CD8-positive, alpha-beta T cell (primary cell): ENCODE measurements at regions of chr7 and their contacts with region 1.

Region 1: GRCh38 chr7:23013715-23014649 is at the start of gene HYCC1:
- DNase-seq: peak; percentile 97 to 99 (median 99)
- ATAC-seq: peak; percentile 97
- H3K4me3 ChIP-seq: peak within 1 kb of the TSS; percentile 65 to 95
- H3K4me3 Mint-ChIP-seq: peak within 1 kb of the TSS; percentile 97
- H3K27ac ChIP-seq: peak within 1 kb of the TSS; percentile 48 to 63
- H3K27ac Mint-ChIP-seq: peak within 1 kb of the TSS; percentile 89
- H3K4me1 ChIP-seq: peaks cover 21% of the 10 kb centered on the region
- H3K4me1 Mint-ChIP-seq: peaks cover 20% of the 10 kb centered on the region
- H3K27me3 ChIP-seq: no peaks in the 10 kb centered on the region
- H3K27me3 Mint-ChIP-seq: peaks cover 3% of the 10 kb centered on the region
- CTCF ChIP-seq: peak; percentile 60
- total RNA-seq, gene HYCC1: 10.7 to 13.5 TPM

Region 2: GRCh38 chr7:22822486-22823141 is 191.4 kb before region 1 on chr7 and contains the start of gene TOMM7:
- CTCF ChIA-PET with region 1: no interaction called
- POLR2A ChIA-PET with region 1: no interaction called
- intact Hi-C with region 1: loop called (anchors 1 kb)
- DNase-seq: peak; percentile 72 to 99 (median 86)
- ATAC-seq: peak; percentile 96
- H3K4me3 ChIP-seq: peak within 1 kb of the TSS; percentile 74 to 89
- H3K4me3 Mint-ChIP-seq: peak within 1 kb of the TSS; percentile 99
- H3K27ac ChIP-seq: peak within 1 kb of the TSS; percentile 85
- H3K27ac Mint-ChIP-seq: peak within 1 kb of the TSS; percentile 99
- H3K4me1 ChIP-seq: peaks cover 20% of the 10 kb centered on the region
- H3K4me1 Mint-ChIP-seq: peaks cover 41% of the 10 kb centered on the region
- H3K27me3 ChIP-seq: no peaks in the 10 kb centered on the region
- H3K27me3 Mint-ChIP-seq: peaks cover 4% of the 10 kb centered on the region
- CTCF ChIP-seq: no peak
- total RNA-seq, gene TOMM7: 595 to 610 TPM

Region 3: GRCh38 chr7:22962775-22963358 is 51.1 kb before region 1 on chr7:
- CTCF ChIA-PET with region 1: no interaction called
- POLR2A ChIA-PET with region 1: no interaction called
- intact Hi-C with region 1: no loop called
- DNase-seq: no peak
- ATAC-seq: no peak
- H3K4me3 ChIP-seq: no peak overlapping the region
- H3K4me3 Mint-ChIP-seq: no peak overlapping the region
- H3K27ac ChIP-seq: no peak overlapping the region
- H3K27ac Mint-ChIP-seq: no peak overlapping the region
- H3K4me1 ChIP-seq: no peaks in the 10 kb centered on the region
- H3K4me1 Mint-ChIP-seq: no peaks in the 10 kb centered on the region
- H3K27me3 ChIP-seq: no peaks in the 10 kb centered on the region
- H3K27me3 Mint-ChIP-seq: no peaks in the 10 kb centered on the region
- CTCF ChIP-seq: no peak

Region 4: DNA sequence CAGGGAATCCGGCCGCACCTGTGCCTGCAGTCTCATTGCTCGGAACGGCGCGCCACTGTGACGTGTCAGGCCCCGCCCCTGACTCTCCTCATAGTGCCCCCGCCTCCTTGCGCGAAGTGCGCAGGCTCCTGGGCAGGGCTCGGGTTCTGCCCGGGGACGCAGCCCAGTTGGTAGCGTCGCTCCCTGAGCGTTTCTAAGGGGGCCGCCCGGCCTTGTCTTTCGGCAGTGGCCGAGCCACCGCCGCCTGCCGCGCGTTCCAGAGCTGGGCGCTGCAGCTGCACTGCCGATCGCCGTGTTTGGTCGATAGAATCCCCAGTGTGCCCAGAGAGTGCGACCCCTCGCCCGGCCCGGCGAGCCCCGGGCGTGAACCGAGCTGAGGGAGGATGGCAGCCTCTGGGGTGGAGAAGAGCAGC is 91.7 kb after region 1 on chr7 and contains the start of gene KLHL7:
- CTCF ChIA-PET with region 1: no interaction called
- POLR2A ChIA-PET with region 1: interaction called, 5 read pairs
- intact Hi-C with region 1: loop called (anchors 1 to 2 kb)
- DNase-seq: peak; percentile 92 to 98 (median 96)
- ATAC-seq: peak; percentile 95
- H3K4me3 ChIP-seq: peak within 1 kb of the TSS; percentile 93 to 94
- H3K4me3 Mint-ChIP-seq: peak within 1 kb of the TSS; percentile 98
- H3K27ac ChIP-seq: peak within 1 kb of the TSS; percentile 97
- H3K27ac Mint-ChIP-seq: peak within 1 kb of the TSS; percentile 95
- H3K4me1 ChIP-seq: peaks cover 23% of the 10 kb centered on the region
- H3K4me1 Mint-ChIP-seq: peaks cover 49% of the 10 kb centered on the region
- H3K27me3 ChIP-seq: no peaks in the 10 kb centered on the region
- H3K27me3 Mint-ChIP-seq: no peaks in the 10 kb centered on the region
- CTCF ChIP-seq: no peak
- total RNA-seq, gene KLHL7: 19.2 to 20.2 TPM

Region 5: DNA sequence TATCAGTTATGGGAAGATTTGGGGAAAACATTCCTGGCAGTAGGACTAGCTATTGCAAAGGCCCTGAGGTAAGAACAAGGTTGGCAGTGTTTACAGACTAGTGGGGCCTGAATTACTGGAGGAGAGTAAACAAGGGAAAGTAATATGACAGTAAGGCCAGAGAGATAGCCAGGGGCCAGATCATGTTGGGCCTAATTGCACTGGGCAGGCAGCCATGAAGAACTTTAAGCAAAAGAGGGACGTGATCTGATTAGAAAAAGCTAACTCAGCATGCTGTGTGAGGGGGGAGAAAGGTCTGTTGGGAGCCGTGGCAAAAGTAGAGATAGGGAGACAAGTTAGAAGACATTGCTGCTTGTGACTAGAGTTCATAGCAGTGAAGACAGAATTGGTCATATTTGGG is 177.0 kb after region 1 on chr7:
- CTCF ChIA-PET with region 1: no interaction called
- POLR2A ChIA-PET with region 1: no interaction called
- intact Hi-C with region 1: no loop called
- DNase-seq: no peak
- ATAC-seq: no peak
- H3K4me3 ChIP-seq: no peak overlapping the region
- H3K4me3 Mint-ChIP-seq: no peak overlapping the region
- H3K27ac ChIP-seq: no peak overlapping the region
- H3K27ac Mint-ChIP-seq: no peak overlapping the region
- H3K4me1 ChIP-seq: peaks cover 3% of the 10 kb centered on the region
- H3K4me1 Mint-ChIP-seq: peaks cover 10% of the 10 kb centered on the region
- H3K27me3 ChIP-seq: no peaks in the 10 kb centered on the region
- H3K27me3 Mint-ChIP-seq: no peaks in the 10 kb centered on the region
- CTCF ChIP-seq: no peak

Region 6: GRCh38 chr7:23520582-23520981 is 506.6 kb after region 1 on chr7:
- CTCF ChIA-PET with region 1: no interaction called
- POLR2A ChIA-PET with region 1: interaction called, 3 read pairs
- intact Hi-C with region 1: loop called in 1 of 2 experiments (anchors 10 kb)
- DNase-seq: peak in 1 of 9 experiments; percentile 37
- ATAC-seq: no peak
- H3K4me3 ChIP-seq: no peak overlapping the region
- H3K4me3 Mint-ChIP-seq: no peak overlapping the region
- H3K27ac ChIP-seq: no peak overlapping the region
- H3K27ac Mint-ChIP-seq: no peak overlapping the region
- H3K4me1 ChIP-seq: peaks cover 23% of the 10 kb centered on the region
- H3K4me1 Mint-ChIP-seq: peaks cover 49% of the 10 kb centered on the region
- H3K27me3 ChIP-seq: no peaks in the 10 kb centered on the region
- H3K27me3 Mint-ChIP-seq: no peaks in the 10 kb centered on the region
- CTCF ChIP-seq: no peak

Region 7: DNA sequence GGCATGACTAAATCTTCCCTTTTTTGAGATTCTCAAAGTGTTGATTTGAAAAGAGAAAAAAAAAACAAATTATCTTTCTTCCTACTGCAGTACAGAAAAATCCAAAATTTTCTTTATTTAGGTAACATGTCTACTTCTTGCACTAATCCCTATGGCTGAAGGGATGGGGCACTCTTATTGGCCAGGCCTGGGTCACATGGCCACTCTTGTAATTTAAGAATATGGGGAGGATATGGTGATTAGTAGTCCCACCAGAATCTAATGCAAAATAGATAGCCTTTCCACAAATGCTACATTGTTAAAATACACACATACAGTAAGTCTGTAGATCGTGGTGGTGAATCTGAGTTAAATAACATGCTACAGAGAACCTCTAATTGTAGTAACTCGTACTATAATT is 1552.3 kb after region 1 on chr7:
- CTCF ChIA-PET with region 1: no interaction called
- POLR2A ChIA-PET with region 1: no interaction called
- intact Hi-C with region 1: loop called in 1 of 2 experiments (anchors 5 kb)
- DNase-seq: no peak
- ATAC-seq: no peak
- H3K4me3 ChIP-seq: no peak overlapping the region
- H3K4me3 Mint-ChIP-seq: no peak overlapping the region
- H3K27ac ChIP-seq: no peak overlapping the region
- H3K27ac Mint-ChIP-seq: no peak overlapping the region
- H3K4me1 ChIP-seq: peaks cover 3% of the 10 kb centered on the region
- H3K4me1 Mint-ChIP-seq: peaks cover 6% of the 10 kb centered on the region
- H3K27me3 ChIP-seq: no peaks in the 10 kb centered on the region
- H3K27me3 Mint-ChIP-seq: peaks cover 7% of the 10 kb centered on the region
- CTCF ChIP-seq: no peak